Ascending aorta (tissue), 2 donors: ENCODE measurements at regions of chr9 and their contacts with region 1.

Region 1: DNA sequence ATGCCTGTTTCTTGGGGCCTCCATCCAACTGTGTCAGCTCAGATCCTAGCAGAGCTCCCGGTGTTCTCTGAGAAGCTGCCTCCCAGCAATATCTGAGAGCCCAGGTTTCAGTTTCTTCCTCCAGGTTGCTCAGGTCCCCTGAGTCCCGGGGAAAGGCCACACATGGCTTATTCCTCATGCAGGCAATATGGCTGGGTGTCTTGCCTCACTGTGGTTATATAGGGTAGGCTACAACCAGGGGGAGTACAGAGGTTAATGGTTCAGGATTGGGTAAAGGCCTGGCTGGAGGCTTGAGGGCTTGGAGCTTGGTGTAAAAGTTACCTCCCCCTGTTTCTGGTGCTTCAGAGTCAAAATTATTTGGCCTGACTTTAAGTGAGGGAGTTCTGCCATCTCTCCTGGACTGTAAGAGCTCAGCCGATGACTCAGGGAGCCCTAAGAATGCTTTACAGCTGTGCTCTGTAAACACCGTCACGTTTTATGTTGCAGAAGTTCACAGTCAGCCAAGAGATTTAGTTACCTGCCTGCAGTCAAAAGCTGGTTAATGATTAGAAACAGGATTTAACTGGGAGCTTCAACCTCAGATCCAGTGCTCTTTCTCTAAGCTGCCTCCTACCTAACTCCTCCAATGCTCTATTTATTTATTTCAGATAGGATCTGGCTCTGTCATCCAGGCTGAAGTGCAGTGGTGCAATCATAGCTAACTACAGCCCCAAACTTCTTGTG is 24.3 kb upstream of the UBAP2 start:
- DNase-seq: no peak
- H3K4me3 ChIP-seq: no peak overlapping the region
- H3K27ac ChIP-seq: peak overlapping the region; percentile 20 to 36
- H3K4me1 ChIP-seq: peaks cover 5 to 14% of the 10 kb centered on the region in 2 donors
- H3K27me3 ChIP-seq: no peaks in the 10 kb centered on the region
- CTCF ChIP-seq: no peak

Region 2: DNA sequence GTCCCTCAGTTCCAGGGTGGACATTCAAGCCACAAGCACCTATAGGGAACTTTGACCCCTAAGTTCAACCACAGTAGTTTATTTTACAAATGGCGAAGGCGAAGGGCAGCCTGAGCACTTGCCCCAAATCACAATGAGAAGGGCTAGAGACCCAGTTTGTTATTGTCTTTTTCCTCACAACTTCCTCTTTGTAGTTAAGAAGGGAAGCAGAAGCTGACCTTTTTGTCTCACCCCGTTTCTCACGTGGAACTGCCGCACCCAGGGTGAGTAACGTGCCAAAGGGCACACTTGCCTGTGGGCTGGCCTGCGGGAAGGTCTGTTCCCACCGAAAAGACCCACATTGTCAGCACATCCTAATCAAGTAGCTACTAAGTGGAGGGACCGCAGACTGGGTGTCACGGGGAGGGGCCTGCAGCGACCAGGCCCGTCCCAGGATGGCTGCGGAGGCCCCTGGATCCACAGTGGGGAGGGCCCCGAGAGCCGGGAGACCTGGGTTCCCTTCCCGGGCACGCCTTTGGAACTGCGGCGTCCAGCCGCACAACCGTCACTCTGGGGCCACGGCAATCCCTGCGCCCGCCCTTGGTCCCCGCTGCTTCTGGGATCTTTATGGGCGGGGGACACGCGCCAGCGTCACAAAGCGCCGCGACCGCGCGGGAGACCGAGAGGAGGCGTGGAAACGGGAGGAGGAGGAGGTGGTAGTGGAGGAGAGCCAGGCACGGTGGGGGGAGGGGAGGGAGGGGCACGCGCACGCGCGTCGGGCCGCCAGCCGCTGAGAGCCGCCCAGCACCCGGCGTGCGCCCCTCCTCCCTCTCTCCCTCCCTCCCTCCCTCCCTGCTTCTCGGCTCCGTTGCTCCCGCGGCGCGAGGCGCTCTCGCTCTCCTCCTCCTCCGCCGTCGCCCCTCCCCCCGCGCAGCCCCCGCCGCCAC is 256.4 kb before region 1 on chr9 and contains the start of gene UBE2R2:
- intact Hi-C with region 1: no loop called
- DNase-seq: peak; percentile 68 to 95
- H3K4me3 ChIP-seq: peak within 1 kb of the TSS; percentile 85 to 95
- H3K27ac ChIP-seq: peak within 1 kb of the TSS; percentile 99 to 100
- H3K4me1 ChIP-seq: peaks cover 0 to 25% of the 10 kb centered on the region in 2 donors
- H3K27me3 ChIP-seq: no peaks in the 10 kb centered on the region
- CTCF ChIP-seq: no peak
- total RNA-seq, gene UBE2R2: 7.2 TPM

Region 3: GRCh38 chr9:34048923-34049697 is 23.9 kb before region 1 on chr9:
- intact Hi-C with region 1: loop called (anchors 2 kb)
- DNase-seq: peak; percentile 94 to 98
- H3K4me3 ChIP-seq: peak overlapping the region; percentile 95 to 98
- H3K27ac ChIP-seq: peak overlapping the region; percentile 85 to 95
- H3K4me1 ChIP-seq: peaks cover 6 to 9% of the 10 kb centered on the region in 2 donors
- H3K27me3 ChIP-seq: no peaks in the 10 kb centered on the region
- CTCF ChIP-seq: no peak